PC-3 (cell line): ENCODE measurements at regions of chr19 and their contacts with region 1.

Region 1: GRCh38 chr19:9075064-9075949 is 11.6 kb upstream of the OR1M1 start:
- DNase-seq: peak; percentile 100
- ATAC-seq: peak; percentile 96
- H3K4me3 ChIP-seq: peak overlapping the region; percentile 24
- H3K27ac ChIP-seq: peak overlapping the region; percentile 85
- H3K4me1 ChIP-seq: peaks cover 14% of the 10 kb centered on the region
- H3K27me3 ChIP-seq: no peaks in the 10 kb centered on the region
- CTCF ChIP-seq: no peak

Region 2: GRCh38 chr19:8654591-8655339 is 420.5 kb before region 1 on chr19:
- CTCF ChIA-PET with region 1: no interaction called
- POLR2A ChIA-PET with region 1: no interaction called
- intact Hi-C with region 1: loop called (anchors 1 kb)
- DNase-seq: peak; percentile 65
- ATAC-seq: peak; percentile 73
- H3K4me3 ChIP-seq: peak overlapping the region; percentile 37; the same call in 1 of the 2 replicates
- H3K27ac ChIP-seq: no peak overlapping the region
- H3K4me1 ChIP-seq: no peaks in the 10 kb centered on the region
- H3K27me3 ChIP-seq: peaks cover 56% of the 10 kb centered on the region
- CTCF ChIP-seq: peak; percentile 86

Region 3: DNA sequence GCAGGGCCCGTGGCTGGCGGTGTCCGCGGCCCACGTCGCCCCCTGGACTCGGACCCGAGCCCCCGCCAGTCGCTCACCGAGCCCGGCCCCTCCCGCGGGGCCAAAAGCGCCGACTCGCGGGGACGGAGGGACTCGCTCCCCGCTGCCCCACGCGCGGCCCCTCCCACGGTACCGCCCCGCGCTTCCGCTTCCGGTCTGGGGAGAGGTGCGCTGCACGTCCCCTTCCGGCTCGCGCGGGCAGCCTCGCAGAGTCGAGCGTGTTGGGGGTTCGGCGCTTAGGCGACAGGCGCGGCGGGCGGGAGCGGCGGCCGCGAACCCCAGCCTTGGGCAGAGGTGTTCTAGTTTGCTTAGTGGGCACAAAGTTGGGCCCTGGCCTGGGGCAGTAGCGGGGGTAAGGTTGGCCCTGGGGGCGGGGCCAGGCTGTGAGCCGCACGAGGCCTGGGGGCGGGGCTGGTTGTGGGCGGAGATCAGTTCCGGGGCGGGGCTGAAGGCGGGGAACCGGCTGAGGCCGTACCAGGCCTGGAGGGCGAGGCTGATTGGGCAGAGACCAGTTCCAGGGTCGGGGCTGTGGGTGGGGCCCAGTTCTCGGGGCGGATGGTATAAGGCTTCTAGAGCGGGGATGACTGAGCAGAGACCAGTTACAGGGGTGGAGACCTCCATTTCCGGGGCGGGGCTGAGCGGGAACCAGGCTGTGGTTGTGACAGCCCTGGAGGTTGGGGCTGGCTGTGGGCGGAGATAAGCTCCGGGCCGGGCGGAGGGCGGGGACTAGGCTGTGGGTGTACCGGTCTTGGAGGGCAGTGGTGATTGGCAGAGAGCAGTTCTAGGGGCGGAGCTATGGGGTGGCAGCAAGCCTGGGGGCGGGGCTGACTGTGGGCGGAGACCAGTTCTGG is 242.9 kb before region 1 on chr19 and contains the starts of genes MBD3L1 and ZNF558:
- CTCF ChIA-PET with region 1: interaction called, 3 read pairs
- POLR2A ChIA-PET with region 1: no interaction called
- intact Hi-C with region 1: loop called (anchors 1 kb)
- DNase-seq: peak; percentile 98
- ATAC-seq: peak; percentile 87
- H3K4me3 ChIP-seq: peak within 1 kb of the TSS; percentile 87
- H3K27ac ChIP-seq: peak within 1 kb of the TSS; percentile 83
- H3K4me1 ChIP-seq: peaks cover 9% of the 10 kb centered on the region
- H3K27me3 ChIP-seq: peaks cover 11% of the 10 kb centered on the region
- CTCF ChIP-seq: peak; percentile 56
- total RNA-seq, gene MBD3L1: not detected in 2 replicates
- total RNA-seq, gene ZNF558: 32.4 and 36.5 TPM in 2 replicates

Region 4: GRCh38 chr19:8965887-8966286 is 109.4 kb before region 1 on chr19:
- CTCF ChIA-PET with region 1: no interaction called
- POLR2A ChIA-PET with region 1: no interaction called
- intact Hi-C with region 1: no loop called
- DNase-seq: no peak
- ATAC-seq: no peak
- H3K4me3 ChIP-seq: no peak overlapping the region
- H3K27ac ChIP-seq: no peak overlapping the region
- H3K4me1 ChIP-seq: no peaks in the 10 kb centered on the region
- H3K27me3 ChIP-seq: no peaks in the 10 kb centered on the region
- CTCF ChIP-seq: no peak

Region 5: DNA sequence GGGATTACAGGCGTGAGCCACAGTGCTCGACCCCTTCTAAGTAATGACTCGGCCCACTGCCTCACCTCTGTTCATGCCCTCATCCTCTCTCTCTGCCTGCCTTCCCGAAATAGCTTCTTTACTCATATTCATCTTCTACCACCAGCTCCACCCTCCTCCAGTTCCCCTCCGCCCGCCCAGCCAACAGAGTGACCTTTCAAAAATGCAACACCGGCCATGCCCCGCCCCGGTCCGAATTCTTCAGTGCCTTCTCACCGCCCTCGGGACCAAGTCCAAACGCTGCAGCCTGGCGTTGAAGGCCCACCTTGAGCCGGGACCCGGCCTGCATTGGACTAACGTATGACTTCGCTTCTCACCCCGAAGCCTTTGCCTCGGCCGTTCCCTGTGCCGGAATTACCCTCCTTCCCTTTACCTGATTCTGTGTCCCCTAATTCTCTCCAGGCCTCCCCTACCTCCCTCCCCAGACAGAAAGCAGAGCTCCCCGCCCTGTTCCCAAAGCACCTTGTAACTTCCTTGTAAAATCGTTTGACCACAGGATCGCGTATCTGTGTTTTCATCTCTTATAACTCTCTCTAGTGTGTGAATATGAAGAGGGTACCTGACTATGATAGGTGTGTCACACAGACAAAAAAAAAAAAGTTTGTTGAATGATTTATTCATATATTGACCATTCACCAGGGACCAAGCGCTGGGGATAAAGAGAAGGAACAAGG is 57.0 kb before region 1 on chr19:
- CTCF ChIA-PET with region 1: no interaction called
- POLR2A ChIA-PET with region 1: no interaction called
- intact Hi-C with region 1: loop called (anchors 5 kb)
- DNase-seq: peak; percentile 96
- ATAC-seq: peak; percentile 87
- H3K4me3 ChIP-seq: peak overlapping the region; percentile 59
- H3K27ac ChIP-seq: peak overlapping the region; percentile 98
- H3K4me1 ChIP-seq: peaks cover 19% of the 10 kb centered on the region
- H3K27me3 ChIP-seq: no peaks in the 10 kb centered on the region
- CTCF ChIP-seq: no peak

Region 6: GRCh38 chr19:9054765-9055164 is 20.5 kb before region 1 on chr19:
- CTCF ChIA-PET with region 1: no interaction called
- POLR2A ChIA-PET with region 1: no interaction called
- intact Hi-C with region 1: loop called (anchors 1 kb)
- DNase-seq: peak; percentile 95
- ATAC-seq: peak; percentile 85
- H3K4me3 ChIP-seq: peak overlapping the region; percentile 42; the same call in 1 of the 2 replicates
- H3K27ac ChIP-seq: peak overlapping the region; percentile 94
- H3K4me1 ChIP-seq: peaks cover 31% of the 10 kb centered on the region
- H3K27me3 ChIP-seq: no peaks in the 10 kb centered on the region
- CTCF ChIP-seq: no peak